Heart left ventricle (tissue), 16 donors: ENCODE measurements at regions of chr18 and their contacts with region 1.

Region 1: DNA sequence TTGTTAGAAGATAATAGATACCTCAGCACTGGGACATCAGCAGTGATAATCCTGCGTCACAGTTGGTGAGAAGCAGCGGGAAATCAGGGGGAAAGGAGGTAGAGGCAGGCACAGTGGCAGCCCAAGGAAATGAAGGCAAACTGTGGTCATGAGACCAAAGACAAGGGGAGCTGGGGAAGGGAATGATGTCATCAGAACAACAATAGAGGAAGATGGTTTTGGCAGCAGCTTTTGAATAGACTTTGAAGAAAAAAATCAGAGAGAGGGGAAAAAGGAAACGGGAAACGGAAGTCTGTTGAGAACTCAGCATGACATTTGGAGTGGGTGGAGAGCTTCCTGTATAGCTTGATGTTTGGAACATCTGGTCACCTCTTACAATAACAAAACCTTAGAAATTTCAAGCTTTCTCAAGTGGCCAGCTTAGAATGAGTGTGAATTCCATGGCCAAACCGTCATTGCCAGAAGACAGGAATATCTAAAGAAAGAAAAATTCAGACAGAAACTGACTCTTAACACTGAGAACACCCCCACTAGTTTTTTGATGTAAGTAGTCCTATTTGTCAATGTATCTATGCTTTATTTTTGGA is 18.4 kb upstream of the YES1 start:
- DNase-seq: peak in 3 of 5 donors; percentile 35 to 51 (median 40)
- ATAC-seq: peak; percentile 68 to 92 (median 82)
- H3K4me3 ChIP-seq: peak overlapping the region in 1 of 12 donors; percentile 13
- H3K27ac ChIP-seq: peak overlapping the region; percentile 13 to 86 (median 65)
- H3K4me1 ChIP-seq: peaks cover 0 to 19% (median 6%) of the 10 kb centered on the region in 12 donors
- H3K27me3 ChIP-seq: peaks cover 0 to 14% (median 0%) of the 10 kb centered on the region in 9 donors
- CTCF ChIP-seq: no peak
- POLR2A ChIP-seq: no peak

Region 2: DNA sequence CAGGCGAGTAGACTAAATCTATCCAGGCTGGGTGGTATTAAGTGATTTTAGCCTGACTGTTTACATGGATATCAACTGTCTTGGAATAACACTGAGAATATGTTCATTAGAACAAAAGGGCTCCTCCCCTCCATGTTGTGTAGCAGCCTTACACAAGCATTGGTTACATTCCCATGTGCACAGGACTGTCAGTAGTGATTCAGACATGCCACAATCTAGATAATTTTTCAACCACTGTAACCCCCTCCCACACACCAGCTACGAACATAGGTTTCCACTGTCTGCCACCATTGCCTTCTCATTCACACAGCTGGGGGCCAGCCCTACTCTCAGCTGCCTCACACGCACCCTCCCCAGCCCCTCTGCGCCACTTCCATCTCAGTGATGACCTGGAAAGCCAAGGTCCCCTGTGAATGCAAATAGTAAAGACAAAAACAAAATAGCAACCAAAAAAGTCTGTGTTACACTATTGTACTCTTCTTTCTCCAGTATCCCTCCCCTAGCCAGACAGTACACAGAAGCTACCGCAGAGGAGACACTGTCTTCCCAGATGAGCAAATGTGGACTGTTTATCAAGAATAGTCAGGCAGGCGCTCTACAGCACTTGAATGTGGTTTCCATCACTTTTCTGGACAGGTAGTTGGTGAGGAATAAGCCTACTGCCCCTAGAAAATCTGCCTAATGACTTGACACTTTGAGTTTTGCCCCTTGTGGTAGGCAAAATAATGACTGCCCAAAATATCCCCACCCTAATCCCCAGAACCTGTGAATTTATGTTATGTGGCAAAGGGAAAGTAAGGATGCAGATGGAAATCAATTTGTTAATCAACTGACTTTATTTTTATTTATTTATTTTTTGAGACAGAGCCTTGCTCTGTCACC is 200.9 kb before region 1 on chr18:
- intact Hi-C with region 1: loop called in 6 of 10 experiments (anchors 1 to 5 kb)
- DNase-seq: no peak
- ATAC-seq: no peak
- H3K4me3 ChIP-seq: no peak overlapping the region
- H3K27ac ChIP-seq: no peak overlapping the region
- H3K4me1 ChIP-seq: no peaks in the 10 kb centered on the region
- H3K27me3 ChIP-seq: peaks cover 0 to 4% (median 0%) of the 10 kb centered on the region in 9 donors
- CTCF ChIP-seq: no peak
- POLR2A ChIP-seq: no peak

Region 3: GRCh38 chr18:681985-682384 is 148.4 kb before region 1 on chr18:
- intact Hi-C with region 1: no loop called
- DNase-seq: no peak
- ATAC-seq: no peak
- H3K4me3 ChIP-seq: no peak overlapping the region
- H3K27ac ChIP-seq: no peak overlapping the region
- H3K4me1 ChIP-seq: no peaks in the 10 kb centered on the region
- H3K27me3 ChIP-seq: no peaks in the 10 kb centered on the region
- CTCF ChIP-seq: no peak
- POLR2A ChIP-seq: no peak

Region 4: DNA sequence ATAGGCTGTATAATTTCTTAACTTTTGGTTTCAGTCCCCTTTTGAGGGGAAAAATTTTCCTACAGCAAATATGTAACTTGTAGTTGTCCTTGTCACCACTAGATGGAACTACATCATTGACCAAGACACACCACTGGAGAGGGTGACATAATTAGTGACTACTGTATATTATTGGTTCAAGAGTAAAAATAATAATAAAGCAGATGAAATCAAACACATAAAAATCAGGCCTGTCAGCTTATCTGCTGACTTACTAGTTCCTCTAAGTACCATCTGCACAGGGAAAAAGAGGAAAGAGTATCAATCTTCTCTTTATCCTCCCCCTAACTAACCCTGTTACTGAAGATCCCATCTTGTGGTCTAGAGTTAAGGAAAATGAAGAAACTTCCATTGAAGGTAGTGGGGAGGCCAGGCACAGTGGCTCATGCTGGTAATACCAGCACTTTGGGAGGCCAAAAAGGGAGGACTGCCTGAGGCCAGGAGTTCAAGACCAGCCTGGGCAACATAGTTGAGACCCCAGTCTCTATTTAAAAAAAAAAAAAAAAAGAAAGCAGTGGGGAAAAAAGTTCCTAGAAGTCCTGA is 88.4 kb before region 1 on chr18:
- intact Hi-C with region 1: loop called (anchors 1 to 5 kb)
- DNase-seq: no peak
- ATAC-seq: peak; percentile 20 to 82 (median 74)
- H3K4me3 ChIP-seq: no peak overlapping the region
- H3K27ac ChIP-seq: peak overlapping the region in 1 of 12 donors; percentile 9
- H3K4me1 ChIP-seq: peaks cover 0 to 4% (median 0%) of the 10 kb centered on the region in 12 donors
- H3K27me3 ChIP-seq: no peaks in the 10 kb centered on the region
- CTCF ChIP-seq: peak; percentile 73 to 86 (median 79)
- POLR2A ChIP-seq: no peak

Region 5: GRCh38 chr18:801137-801536 is 29.3 kb before region 1 on chr18:
- intact Hi-C with region 1: no loop called
- DNase-seq: no peak
- ATAC-seq: no peak
- H3K4me3 ChIP-seq: no peak overlapping the region
- H3K27ac ChIP-seq: no peak overlapping the region
- H3K4me1 ChIP-seq: peaks cover 0 to 28% (median 13%) of the 10 kb centered on the region in 12 donors
- H3K27me3 ChIP-seq: peaks cover 0 to 31% (median 0%) of the 10 kb centered on the region in 9 donors
- CTCF ChIP-seq: no peak
- POLR2A ChIP-seq: no peak